Activated T-helper 2 cell treated with anti-CD3 and anti-CD28 coated beads, Interferon-gamma antibody, Interleukin-2, Interleukin-4, amounts not matched to agents 10 μg/mL and 5 μg/mL and 100 μg/mL, durations not matched to agents 14 hours and 24 hours and 36 hours (primary cell): ENCODE measurements at regions of chr11 and their contacts with region 1.

Region 1: GRCh38 chr11:125625630-125626287 is 796 bp downstream of the CHEK1 start:
- DNase-seq: peak; percentile 85
- H3K4me3 Mint-ChIP-seq: peak overlapping the region; percentile 91
- H3K27ac Mint-ChIP-seq: peak overlapping the region; percentile 93
- H3K4me1 Mint-ChIP-seq: peaks cover 28% of the 10 kb centered on the region
- H3K27me3 Mint-ChIP-seq: no peaks in the 10 kb centered on the region

Region 2: DNA sequence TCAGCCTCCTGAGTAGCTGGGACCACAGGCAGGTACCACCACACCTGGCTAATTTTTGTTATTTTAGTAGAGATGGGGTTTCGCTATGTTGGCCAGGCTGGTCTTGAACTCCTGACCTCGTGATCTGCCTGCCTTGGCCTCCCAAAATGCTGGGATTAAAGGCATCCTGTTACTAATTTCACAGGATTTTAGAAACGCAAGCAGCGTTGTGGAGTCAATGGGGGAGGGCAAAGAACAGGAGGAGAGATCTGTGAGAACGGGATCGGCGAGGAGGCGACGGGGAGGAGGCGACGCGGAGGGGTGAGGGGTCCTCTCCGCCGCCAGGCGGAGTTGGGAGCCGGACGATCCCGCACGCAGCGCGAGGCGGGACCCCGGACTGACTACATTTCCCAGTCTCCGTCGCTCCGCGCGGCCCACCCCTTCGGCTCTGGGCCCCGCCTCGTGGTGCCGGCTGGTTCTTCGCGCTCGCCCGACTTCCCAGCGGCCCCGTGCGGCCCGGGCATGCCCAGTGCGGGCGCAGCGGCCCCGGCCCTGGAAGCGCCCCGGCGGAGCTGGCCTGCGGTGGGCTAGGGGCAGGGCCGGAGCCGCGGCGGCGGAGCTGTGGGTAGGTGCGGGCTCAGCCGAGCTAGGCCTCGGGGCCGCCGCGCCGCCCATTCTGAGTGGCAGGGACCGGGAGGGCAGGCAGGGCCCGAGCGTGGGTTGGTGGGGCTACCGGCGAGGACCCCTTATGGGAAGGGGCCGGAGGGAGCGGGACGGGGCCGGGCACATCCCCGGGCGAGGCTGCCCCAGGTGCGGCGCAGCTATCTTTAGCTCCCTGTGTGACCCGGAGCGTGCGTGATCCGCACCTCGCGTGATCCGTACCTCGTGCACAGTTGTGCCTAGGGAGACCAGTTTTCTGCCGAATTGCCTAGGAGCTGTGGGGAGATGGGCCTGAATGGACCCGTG is 56.5 kb before region 1 on chr11 and contains the start of gene EI24:
- intact Hi-C with region 1: loop called (anchors 1 kb)
- DNase-seq: peak; percentile 86
- H3K4me3 Mint-ChIP-seq: peak within 1 kb of the TSS; percentile 89
- H3K27ac Mint-ChIP-seq: peak within 1 kb of the TSS; percentile 91
- H3K4me1 Mint-ChIP-seq: peaks cover 22% of the 10 kb centered on the region
- H3K27me3 Mint-ChIP-seq: no peaks in the 10 kb centered on the region
- total RNA-seq, gene EI24: 44.4 and 50.9 TPM in 2 replicates

Region 3: GRCh38 chr11:125592305-125593112 is 33.2 kb before region 1 on chr11 and contains the start of gene STT3A:
- intact Hi-C with region 1: loop called (anchors 1 kb)
- DNase-seq: peak; percentile 97
- H3K4me3 Mint-ChIP-seq: peak within 1 kb of the TSS; percentile 99
- H3K27ac Mint-ChIP-seq: peak within 1 kb of the TSS; percentile 92
- H3K4me1 Mint-ChIP-seq: peaks cover 38% of the 10 kb centered on the region
- H3K27me3 Mint-ChIP-seq: no peaks in the 10 kb centered on the region
- total RNA-seq, gene STT3A: 187 and 198 TPM in 2 replicates

Region 4: DNA sequence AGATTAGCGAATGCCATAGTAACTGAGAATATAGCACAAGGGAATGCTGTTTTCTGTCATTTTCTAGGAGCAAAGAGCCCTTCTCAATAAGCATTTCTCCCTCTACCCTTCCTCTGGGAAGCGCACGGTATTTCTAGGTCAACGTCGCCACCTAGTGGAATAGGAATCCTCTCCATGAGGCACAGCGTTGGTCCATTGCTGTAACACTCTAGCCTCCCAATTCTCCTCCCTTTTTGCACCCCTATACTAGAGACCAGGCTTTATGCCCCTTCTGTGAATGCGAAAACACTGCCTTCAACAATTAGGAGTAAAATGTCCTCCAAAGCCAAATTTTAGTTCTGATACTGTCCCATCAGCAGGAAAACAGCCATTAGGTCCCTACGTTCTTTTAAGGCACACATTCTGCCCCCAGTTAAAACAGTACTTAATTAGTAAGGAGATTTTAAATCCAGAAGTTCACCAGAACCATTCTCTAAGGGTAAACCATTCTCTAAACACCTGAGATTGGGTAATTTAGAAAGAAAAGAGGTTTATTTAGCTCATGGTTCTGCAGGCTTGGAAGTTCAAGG is 248.9 kb after region 1 on chr11:
- intact Hi-C with region 1: loop called (anchors 5 kb)
- DNase-seq: no peak
- H3K4me3 Mint-ChIP-seq: no peak overlapping the region
- H3K27ac Mint-ChIP-seq: no peak overlapping the region
- H3K4me1 Mint-ChIP-seq: peaks cover 1% of the 10 kb centered on the region
- H3K27me3 Mint-ChIP-seq: peaks cover 6% of the 10 kb centered on the region

Region 5: GRCh38 chr11:126431401-126432064 is 805.8 kb after region 1 on chr11:
- intact Hi-C with region 1: no loop called
- DNase-seq: no peak
- H3K4me3 Mint-ChIP-seq: no peak overlapping the region
- H3K27ac Mint-ChIP-seq: no peak overlapping the region
- H3K4me1 Mint-ChIP-seq: no peaks in the 10 kb centered on the region
- H3K27me3 Mint-ChIP-seq: no peaks in the 10 kb centered on the region